ENCODE measurements at regions of chr9 and their contacts with region 1.

Region 1: GRCh38 chr9:81521892-81522291 is 167.5 kb downstream of the TLE1 start:
- DNase-seq: no peak
- H3K4me3 ChIP-seq: no peak overlapping the region
- H3K27ac ChIP-seq: no peak overlapping the region
- H3K4me1 ChIP-seq: peaks cover 0 to 6% (median 0%) of the 10 kb centered on the region in 4 experiments
- H3K27me3 ChIP-seq: peaks cover 0 to 2% (median 0%) of the 10 kb centered on the region in 5 experiments

Region 2: GRCh38 chr9:81506941-81507864 is 14.7 kb before region 1 on chr9:
- CTCF ChIA-PET with region 1: interaction called, 11 read pairs
- POLR2A ChIA-PET with region 1: no interaction called
- DNase-seq: no peak
- H3K4me3 ChIP-seq: no peak overlapping the region
- H3K27ac ChIP-seq: no peak overlapping the region
- H3K4me1 ChIP-seq: peaks cover 0 to 11% (median 2%) of the 10 kb centered on the region in 4 experiments
- H3K27me3 ChIP-seq: no peaks in the 10 kb centered on the region

Region 3: DNA sequence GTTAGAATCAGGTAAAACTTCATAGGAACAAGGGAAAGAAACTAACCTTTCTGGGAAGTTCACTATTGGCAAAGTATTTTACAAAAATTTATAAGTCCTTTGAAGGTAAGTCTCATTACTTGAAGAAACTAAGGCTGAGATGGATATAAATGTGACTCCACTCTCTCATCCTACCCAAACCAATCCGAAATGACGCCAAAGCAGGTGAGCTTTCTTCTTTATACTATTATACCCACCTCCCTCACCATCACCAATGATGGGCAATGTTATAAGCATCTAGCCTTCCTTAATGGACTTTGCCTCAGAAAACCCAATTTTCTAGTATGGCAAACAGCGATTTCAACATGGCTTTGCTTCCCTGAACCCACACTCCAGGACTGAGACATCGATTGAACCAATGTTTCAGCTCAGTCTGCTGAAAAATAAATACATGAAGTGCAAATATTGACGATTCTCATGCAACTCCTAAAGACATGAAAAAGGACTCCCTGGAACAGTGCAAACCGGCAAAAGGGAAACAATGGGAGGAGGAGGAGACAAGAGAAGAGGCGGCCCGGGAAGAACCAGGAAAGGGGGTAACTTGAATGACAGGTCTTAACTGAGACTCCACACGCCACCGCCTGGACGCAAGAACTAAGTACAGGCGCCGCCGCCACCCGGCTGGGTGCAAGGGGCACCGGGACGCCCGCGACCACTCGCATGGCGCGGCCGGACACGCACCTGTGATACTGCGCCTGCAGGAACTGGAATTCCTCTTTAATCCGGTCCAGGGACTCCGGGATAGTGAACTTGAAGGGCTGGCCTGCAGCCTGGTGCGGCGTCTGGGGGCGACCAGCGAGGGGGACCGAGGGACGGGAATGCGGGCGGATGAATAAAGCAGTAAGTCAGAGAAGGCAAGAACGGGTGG is 165.0 kb after region 1 on chr9:
- CTCF ChIA-PET with region 1: interaction called, 29 read pairs
- POLR2A ChIA-PET with region 1: no interaction called
- DNase-seq: peak; percentile 50 to 63 (median 56)
- H3K4me3 ChIP-seq: peak overlapping the region; percentile 26 to 88 (median 68)
- H3K27ac ChIP-seq: no peak overlapping the region
- H3K4me1 ChIP-seq: peaks cover 22 to 48% (median 44%) of the 10 kb centered on the region in 4 experiments
- H3K27me3 ChIP-seq: peaks cover 8 to 68% (median 22%) of the 10 kb centered on the region in 5 experiments

Region 4: DNA sequence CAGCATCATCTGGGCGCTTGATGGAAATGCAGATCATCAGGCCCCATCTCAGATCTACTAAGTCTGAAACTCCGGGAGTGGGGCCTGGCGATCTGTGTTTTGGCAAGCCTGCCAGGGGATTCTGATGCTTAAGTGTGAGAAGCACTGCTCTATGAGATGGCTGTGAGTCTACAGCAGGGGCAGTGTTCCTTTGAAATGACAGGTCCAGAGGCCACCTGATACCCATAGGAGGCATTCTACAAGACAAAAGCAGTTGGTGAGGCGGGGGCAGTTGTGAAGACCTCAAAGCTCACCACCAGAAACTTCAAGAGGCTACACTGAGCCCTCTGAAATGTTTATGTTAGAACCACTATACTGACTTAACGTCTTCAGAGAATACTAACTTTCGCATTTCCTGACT is 319.4 kb after region 1 on chr9:
- CTCF ChIA-PET with region 1: no interaction called
- POLR2A ChIA-PET with region 1: no interaction called
- DNase-seq: no peak
- H3K4me3 ChIP-seq: no peak overlapping the region
- H3K27ac ChIP-seq: no peak overlapping the region
- H3K4me1 ChIP-seq: no peaks in the 10 kb centered on the region
- H3K27me3 ChIP-seq: no peaks in the 10 kb centered on the region

Region 5: DNA sequence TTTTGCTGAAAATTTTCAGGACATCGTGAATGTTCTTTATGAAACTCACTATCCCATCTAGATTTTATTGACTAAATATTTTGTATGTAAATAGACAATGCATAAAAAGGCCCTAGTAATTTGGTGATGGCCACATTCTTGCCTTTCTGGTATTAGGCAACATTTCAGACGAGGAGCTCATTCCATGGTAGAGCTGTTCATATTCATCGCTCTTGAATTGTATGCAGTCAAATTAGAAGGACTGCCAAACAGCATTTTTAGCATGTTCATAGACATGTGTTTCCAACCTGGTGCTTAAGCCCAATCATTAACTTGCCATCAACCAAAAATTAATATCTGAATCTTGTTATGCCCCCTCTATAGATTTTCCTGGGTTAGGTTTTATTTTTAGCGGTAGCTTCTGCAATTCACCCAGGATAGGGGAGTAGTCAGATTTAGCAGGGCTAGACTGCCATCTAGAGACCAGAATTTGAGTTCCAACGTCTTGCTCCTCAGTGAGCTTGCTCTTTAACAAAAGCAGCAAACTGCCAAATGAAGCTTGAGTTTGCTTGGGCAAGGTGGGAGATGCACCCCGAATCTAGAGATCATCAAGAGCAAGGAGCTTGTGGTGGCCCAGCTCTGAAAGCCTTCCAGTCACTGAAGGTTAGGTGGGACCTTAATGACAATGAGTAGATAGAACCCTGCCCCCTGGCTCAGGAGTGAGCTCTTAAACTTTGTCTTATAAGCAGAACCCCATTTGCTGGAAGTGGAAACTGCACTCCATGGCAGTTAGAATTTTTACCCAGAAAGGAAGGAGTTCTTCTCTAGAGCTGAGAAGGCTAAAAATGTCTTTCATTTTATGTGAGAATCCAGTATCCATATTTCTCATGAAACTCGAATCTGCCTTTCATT is 1084.8 kb after region 1 on chr9:
- CTCF ChIA-PET with region 1: interaction called, 17 read pairs
- POLR2A ChIA-PET with region 1: no interaction called
- DNase-seq: peak; percentile 63 to 82 (median 77)
- H3K4me3 ChIP-seq: no peak overlapping the region
- H3K27ac ChIP-seq: no peak overlapping the region
- H3K4me1 ChIP-seq: no peaks in the 10 kb centered on the region
- H3K27me3 ChIP-seq: no peaks in the 10 kb centered on the region